ENCODE measurements at regions of chr2 and their contacts with region 1.

Region 1: GRCh38 chr2:240434728-240435456 is 571 bp upstream of the GPC1 start:
- DNase-seq: peak; percentile 83 to 86 (median 85)
- H3K4me3 ChIP-seq: peak overlapping the region; percentile 47 to 62
- H3K4me3 Mint-ChIP-seq: peak overlapping the region; percentile 84 to 90 (median 86)
- H3K27ac ChIP-seq: no peak overlapping the region
- H3K27ac Mint-ChIP-seq: peak overlapping the region in 5 of 7 donors; percentile 69 to 95 (median 81)
- H3K4me1 ChIP-seq: peaks cover 16% of the 10 kb centered on the region
- H3K4me1 Mint-ChIP-seq: peaks cover 2 to 18% (median 9%) of the 10 kb centered on the region in 4 donors
- H3K27me3 ChIP-seq: peaks cover 8% of the 10 kb centered on the region
- H3K27me3 Mint-ChIP-seq: peaks cover 6 to 11% of the 10 kb centered on the region in 2 donors

Region 2: DNA sequence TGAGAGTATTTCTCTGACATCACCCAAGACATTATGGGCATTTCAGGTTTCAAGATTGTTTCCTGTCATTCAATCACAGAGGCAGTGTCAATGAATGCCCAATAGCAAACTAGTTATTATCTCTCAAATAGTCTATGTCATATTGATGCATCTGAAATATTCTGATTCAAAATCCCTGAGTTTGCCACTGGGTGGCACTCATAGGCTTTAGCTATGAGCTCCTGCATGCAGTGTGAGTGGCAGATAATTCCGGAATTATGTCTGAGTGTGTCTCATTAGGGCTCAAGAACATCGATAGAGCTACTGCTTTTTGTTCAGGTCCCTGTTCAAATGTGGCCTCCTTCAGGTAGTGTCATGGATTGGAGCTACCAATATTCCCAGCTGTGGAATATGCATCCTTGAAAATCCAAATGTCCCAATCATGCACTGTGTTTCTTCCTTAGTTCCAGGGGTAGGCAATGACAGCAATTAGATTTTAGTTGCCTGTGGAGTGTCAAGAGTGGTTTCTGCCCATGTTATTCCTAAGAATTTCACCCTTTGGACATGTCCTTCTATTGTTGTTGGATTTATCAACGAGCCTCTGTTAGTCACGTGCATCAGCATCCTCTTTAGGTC is 373.8 kb before region 1 on chr2:
- CTCF ChIA-PET with region 1: no interaction called
- POLR2A ChIA-PET with region 1: no interaction called
- intact Hi-C with region 1: loop called (anchors 1 kb)
- DNase-seq: peak; percentile 45 to 62 (median 55)
- H3K4me3 ChIP-seq: no peak overlapping the region
- H3K4me3 Mint-ChIP-seq: no peak overlapping the region
- H3K27ac ChIP-seq: no peak overlapping the region
- H3K27ac Mint-ChIP-seq: no peak overlapping the region
- H3K4me1 ChIP-seq: no peaks in the 10 kb centered on the region
- H3K4me1 Mint-ChIP-seq: no peaks in the 10 kb centered on the region
- H3K27me3 ChIP-seq: no peaks in the 10 kb centered on the region
- H3K27me3 Mint-ChIP-seq: peaks cover 9 to 30% of the 10 kb centered on the region in 2 donors

Region 3: DNA sequence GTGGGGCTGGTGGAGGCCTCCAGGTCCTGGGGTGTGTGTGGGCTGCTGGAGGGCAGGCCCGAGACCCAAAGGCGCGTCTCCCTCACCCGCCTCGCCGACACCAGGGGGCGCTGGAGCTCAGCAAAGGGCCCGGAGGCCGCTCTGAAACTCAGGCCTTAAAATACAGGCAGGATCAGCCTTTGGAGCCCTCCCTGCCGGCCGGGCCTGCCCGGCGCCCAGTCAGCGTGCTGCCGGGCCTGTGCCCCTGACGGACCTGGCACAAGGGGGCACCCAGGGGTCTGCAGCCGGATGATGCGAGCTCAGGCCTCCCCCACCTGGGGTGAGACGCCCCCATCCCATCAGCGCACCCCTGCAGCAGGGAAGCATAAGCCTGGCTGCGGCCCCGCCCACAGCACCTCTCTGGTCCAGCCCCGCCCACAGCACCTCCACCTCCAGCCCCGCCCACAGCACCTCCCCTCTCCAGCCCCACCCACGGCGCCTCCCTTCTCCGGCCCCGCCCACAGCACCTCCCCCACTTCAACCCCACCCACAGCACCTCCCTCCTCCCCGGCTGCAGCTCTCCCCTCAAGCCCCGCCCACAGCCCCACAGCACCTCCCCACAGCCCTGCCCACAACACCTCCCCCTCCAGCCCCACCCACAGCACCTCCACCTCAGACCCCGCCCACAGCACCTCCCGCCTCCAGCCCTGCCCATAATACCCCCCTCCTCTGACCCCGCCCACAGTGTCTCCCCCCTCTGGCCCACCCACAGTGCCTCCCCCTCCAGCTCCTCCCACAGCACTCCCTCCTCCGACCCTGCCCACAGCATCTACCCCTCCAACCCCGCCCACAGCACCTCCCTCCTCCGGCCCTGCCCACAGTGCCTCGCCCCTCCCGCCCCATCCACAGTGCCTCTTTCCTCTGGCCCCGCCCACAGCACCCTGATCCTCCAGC is 201.7 kb before region 1 on chr2:
- CTCF ChIA-PET with region 1: interaction called, 13 read pairs
- POLR2A ChIA-PET with region 1: interaction called, 3 read pairs
- intact Hi-C with region 1: no loop called
- DNase-seq: peak; percentile 59 to 76 (median 71)
- H3K4me3 ChIP-seq: no peak overlapping the region
- H3K4me3 Mint-ChIP-seq: peak overlapping the region in 1 of 8 donors; percentile 58
- H3K27ac ChIP-seq: no peak overlapping the region
- H3K27ac Mint-ChIP-seq: peak overlapping the region in 1 of 7 donors; percentile 48
- H3K4me1 ChIP-seq: no peaks in the 10 kb centered on the region
- H3K4me1 Mint-ChIP-seq: peaks cover 2 to 10% (median 5%) of the 10 kb centered on the region in 4 donors
- H3K27me3 ChIP-seq: no peaks in the 10 kb centered on the region
- H3K27me3 Mint-ChIP-seq: peaks cover 2 to 10% of the 10 kb centered on the region in 2 donors

Region 4: GRCh38 chr2:240298803-240299709 is 135.8 kb before region 1 on chr2:
- CTCF ChIA-PET with region 1: no interaction called
- POLR2A ChIA-PET with region 1: no interaction called
- intact Hi-C with region 1: loop called (anchors 2 kb)
- DNase-seq: no peak
- H3K4me3 ChIP-seq: no peak overlapping the region
- H3K4me3 Mint-ChIP-seq: no peak overlapping the region
- H3K27ac ChIP-seq: no peak overlapping the region
- H3K27ac Mint-ChIP-seq: no peak overlapping the region
- H3K4me1 ChIP-seq: no peaks in the 10 kb centered on the region
- H3K4me1 Mint-ChIP-seq: no peaks in the 10 kb centered on the region
- H3K27me3 ChIP-seq: no peaks in the 10 kb centered on the region
- H3K27me3 Mint-ChIP-seq: peaks cover 13 to 18% of the 10 kb centered on the region in 2 donors

Region 5: DNA sequence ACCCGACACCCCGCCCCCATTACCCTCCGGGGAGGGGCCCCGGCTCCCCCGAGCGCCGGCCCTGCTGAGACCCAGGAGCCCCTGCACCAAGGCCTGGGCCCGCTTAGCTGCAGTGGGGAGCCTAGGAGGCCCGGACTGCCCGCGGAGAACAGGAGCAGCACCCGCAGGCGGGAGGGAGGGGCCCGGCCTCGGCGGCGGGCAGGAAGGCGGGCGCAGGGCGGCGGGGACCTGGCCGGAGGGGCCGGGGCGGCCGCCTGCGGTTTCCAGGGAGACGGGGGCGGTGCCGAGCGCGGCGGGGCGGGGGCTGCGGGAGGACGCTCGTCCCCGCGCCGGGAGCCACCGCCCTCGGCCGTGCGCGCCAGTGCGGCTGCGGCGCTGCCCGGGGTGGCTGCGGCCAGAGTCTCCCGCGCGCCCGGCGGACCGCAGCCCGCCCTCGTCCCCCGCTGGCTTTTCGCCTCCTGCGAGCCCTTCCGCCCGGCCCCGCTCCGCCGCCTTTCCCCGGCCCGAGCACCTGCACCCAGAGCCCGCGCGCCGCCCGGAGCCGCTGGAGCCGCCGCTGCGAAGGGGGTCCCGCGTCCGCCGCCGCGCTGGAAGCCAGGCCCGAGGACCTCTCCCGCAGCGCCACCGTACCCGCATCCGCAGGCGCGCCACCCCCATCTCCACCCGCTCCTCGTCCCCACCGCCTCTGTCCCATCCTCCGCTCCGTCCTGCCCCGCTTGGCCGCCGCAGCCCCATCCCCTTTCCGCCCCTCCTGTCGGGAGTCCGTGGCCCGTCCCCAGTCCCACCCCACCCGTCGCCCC is 17.8 kb after region 1 on chr2:
- CTCF ChIA-PET with region 1: no interaction called
- POLR2A ChIA-PET with region 1: no interaction called
- intact Hi-C with region 1: no loop called
- DNase-seq: peak in 1 of 5 donors; percentile 25
- H3K4me3 ChIP-seq: no peak overlapping the region
- H3K4me3 Mint-ChIP-seq: peak overlapping the region in 7 of 8 donors; percentile 26 to 73 (median 52)
- H3K27ac ChIP-seq: no peak overlapping the region
- H3K27ac Mint-ChIP-seq: no peak overlapping the region
- H3K4me1 ChIP-seq: peaks cover 11% of the 10 kb centered on the region
- H3K4me1 Mint-ChIP-seq: peaks cover 4 to 18% (median 10%) of the 10 kb centered on the region in 4 donors
- H3K27me3 ChIP-seq: peaks cover 18% of the 10 kb centered on the region
- H3K27me3 Mint-ChIP-seq: peaks cover 19 to 31% of the 10 kb centered on the region in 2 donors

Region 6: GRCh38 chr2:240832205-240832727 is 397.4 kb after region 1 on chr2:
- CTCF ChIA-PET with region 1: no interaction called
- POLR2A ChIA-PET with region 1: no interaction called
- intact Hi-C with region 1: loop called (anchors 5 kb)
- DNase-seq: peak; percentile 98 to 99 (median 99)
- H3K4me3 ChIP-seq: peak overlapping the region; percentile 34 to 36
- H3K4me3 Mint-ChIP-seq: peak overlapping the region in 6 of 8 donors; percentile 12 to 81 (median 66)
- H3K27ac ChIP-seq: no peak overlapping the region
- H3K27ac Mint-ChIP-seq: peak overlapping the region in 3 of 7 donors; percentile 55 to 91 (median 82)
- H3K4me1 ChIP-seq: peaks cover 12% of the 10 kb centered on the region
- H3K4me1 Mint-ChIP-seq: peaks cover 0 to 6% (median 3%) of the 10 kb centered on the region in 4 donors
- H3K27me3 ChIP-seq: peaks cover 10% of the 10 kb centered on the region
- H3K27me3 Mint-ChIP-seq: peaks cover 8 to 16% of the 10 kb centered on the region in 2 donors